Posterior cingulate gyrus (tissue), 11 donors: ENCODE measurements at regions of chrX and their contacts with region 1.

Region 1: DNA sequence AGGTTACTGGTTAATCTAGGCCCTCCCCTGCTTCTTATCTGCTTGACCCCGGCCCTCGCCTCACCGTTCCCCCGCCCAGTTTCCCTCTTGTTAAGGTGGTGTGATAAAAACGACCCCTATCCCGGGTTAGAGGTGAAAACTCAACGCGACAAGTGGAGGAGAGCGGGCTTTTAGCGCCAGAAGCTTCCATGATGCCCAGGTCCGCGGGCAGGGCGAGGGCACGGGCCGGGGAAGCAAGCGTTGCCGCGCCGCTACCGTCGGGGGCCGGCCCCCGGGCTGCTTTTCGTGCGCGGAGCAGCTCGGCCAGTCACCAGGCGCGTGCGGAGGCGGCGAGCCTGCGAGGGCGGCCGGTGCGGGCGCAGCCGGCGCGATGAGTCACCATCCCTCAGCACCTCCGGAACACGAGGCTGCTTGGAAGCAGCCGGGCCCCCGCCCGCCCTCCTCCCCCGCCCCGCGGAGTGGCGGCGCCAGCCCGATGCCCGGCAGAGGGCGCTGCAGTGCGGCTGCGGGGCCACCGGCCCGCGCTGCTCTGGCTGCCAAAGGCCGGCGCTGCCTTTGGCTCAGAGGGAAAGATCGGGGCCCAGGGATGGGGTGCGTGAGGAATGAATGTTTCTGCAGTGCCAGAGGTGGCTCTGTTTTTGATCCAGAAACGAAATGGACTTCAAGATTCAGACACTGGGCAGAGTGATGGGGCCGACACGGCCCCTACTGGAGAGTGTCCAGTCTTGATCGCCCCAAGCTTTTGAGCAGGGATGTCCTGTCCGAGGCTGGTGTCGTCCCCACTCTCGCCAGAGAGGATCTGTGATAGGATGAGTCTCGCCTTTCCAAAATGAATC is 107.8 kb downstream of the NHSL2 start:
- DNase-seq: peak; percentile 58 to 97 (median 72)

Region 2: DNA sequence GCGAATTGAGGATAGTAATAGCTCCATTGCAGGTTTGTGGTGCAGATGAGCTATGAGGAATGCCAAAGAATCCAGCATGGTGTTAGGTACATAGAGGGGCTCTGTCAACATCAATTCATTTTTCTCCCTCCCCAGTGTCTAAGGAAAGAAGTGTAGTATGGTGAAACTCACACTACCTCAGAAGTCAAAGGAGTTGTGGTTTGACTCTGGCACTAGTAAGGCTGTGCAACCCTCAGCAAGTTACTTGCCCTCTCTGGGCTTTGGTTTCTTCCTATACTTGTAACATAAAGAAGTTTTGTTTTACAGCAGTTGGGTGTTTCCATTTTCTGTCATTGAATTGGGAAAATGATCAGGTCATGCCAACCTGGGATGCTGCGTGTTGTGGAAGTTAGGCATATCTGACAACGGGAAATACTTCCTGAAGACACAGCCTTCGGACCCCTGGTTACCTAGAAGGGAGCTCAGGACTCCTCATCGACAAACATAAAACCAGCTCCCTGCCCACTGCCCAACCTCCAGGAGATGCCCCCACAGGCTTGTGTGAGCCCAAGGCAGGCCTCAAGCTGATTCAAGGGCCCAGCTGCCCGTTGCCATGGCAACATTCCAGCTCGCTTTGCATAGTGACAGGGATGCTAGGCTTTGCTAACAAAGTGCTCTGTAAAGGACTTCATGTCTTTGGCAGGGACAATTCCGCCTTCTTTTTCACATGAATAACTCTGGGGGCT is 41.9 kb after region 1 on chrX:
- intact Hi-C with region 1: loop called (anchors 10 kb)
- DNase-seq: peak; percentile 52 to 96 (median 70)